ENCODE measurements at regions of chr6 and their contacts with region 1.

Region 1: GRCh38 chr6:150395398-150396009 is 26.7 kb downstream of the IYD start:
- H3K4me3 ChIP-seq: no peak overlapping the region
- H3K27ac ChIP-seq: no peak overlapping the region
- H3K4me1 ChIP-seq: no peaks in the 10 kb centered on the region
- CTCF ChIP-seq: peak; percentile 47; the same call in 1 of the 2 replicates

Region 2: GRCh38 chr6:150016324-150017185 is 378.9 kb before region 1 on chr6:
- CTCF ChIA-PET with region 1: interaction called, 14 read pairs
- POLR2A ChIA-PET with region 1: no interaction called
- H3K4me3 ChIP-seq: no peak overlapping the region
- H3K27ac ChIP-seq: no peak overlapping the region
- H3K4me1 ChIP-seq: no peaks in the 10 kb centered on the region
- CTCF ChIP-seq: peak; percentile 69; the same call in 1 of the 2 replicates

Region 3: GRCh38 chr6:150310539-150310938 is 85.0 kb before region 1 on chr6:
- CTCF ChIA-PET with region 1: no interaction called
- POLR2A ChIA-PET with region 1: no interaction called
- H3K4me3 ChIP-seq: no peak overlapping the region
- H3K27ac ChIP-seq: no peak overlapping the region
- H3K4me1 ChIP-seq: no peaks in the 10 kb centered on the region
- CTCF ChIP-seq: no peak

Region 4: DNA sequence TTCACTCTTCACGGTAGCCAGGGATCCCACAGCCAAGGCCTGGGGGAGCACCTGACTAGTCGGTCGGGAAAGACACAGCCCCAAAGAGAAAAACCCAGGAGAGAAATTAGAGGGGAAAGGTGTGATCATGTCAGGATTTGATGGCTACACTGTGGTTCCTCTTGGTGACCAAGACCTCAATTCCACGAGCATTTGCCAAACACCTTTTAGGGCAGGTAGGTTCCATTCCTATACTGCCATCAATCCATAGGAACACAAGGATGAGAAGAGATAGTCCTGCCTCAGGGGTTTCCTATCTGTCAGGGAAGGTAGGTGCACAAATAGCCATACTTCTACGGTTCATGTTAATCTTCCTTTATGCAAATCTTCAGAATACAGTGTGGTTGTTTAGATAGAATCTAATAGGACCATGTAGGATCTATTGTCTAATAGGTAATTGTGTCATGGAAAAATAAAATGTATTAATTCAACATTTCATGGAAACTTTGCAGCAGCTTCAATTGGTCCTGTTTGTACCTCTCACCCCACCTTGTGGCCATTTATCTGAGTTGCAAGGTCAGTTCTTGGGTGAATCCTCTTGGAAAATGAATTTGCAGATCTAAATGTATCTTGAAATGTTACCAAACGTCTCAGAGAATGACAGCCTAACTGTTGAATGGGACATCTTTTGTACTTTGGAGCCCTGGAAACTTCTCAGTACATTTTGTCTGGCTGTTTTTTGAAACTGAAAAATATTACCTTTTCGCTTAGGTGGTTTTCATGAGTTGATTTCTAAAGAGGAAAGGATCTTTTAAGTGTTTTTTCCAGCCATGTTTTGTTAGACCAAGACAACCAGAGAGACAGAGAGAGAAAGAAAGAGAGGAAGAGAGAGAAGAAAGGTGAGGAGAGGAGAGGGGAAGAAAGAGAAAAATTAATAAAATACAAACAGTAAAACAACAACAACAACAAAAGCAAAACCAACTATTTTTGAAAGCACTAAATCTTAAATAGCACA is 60.4 kb before region 1 on chr6:
- CTCF ChIA-PET with region 1: interaction called, 14 read pairs
- POLR2A ChIA-PET with region 1: no interaction called
- H3K4me3 ChIP-seq: no peak overlapping the region
- H3K27ac ChIP-seq: no peak overlapping the region
- H3K4me1 ChIP-seq: peaks cover 2% of the 10 kb centered on the region; the same call in 1 of the 2 replicates
- CTCF ChIP-seq: no peak; the same call in 1 of the 2 replicates

Region 5: DNA sequence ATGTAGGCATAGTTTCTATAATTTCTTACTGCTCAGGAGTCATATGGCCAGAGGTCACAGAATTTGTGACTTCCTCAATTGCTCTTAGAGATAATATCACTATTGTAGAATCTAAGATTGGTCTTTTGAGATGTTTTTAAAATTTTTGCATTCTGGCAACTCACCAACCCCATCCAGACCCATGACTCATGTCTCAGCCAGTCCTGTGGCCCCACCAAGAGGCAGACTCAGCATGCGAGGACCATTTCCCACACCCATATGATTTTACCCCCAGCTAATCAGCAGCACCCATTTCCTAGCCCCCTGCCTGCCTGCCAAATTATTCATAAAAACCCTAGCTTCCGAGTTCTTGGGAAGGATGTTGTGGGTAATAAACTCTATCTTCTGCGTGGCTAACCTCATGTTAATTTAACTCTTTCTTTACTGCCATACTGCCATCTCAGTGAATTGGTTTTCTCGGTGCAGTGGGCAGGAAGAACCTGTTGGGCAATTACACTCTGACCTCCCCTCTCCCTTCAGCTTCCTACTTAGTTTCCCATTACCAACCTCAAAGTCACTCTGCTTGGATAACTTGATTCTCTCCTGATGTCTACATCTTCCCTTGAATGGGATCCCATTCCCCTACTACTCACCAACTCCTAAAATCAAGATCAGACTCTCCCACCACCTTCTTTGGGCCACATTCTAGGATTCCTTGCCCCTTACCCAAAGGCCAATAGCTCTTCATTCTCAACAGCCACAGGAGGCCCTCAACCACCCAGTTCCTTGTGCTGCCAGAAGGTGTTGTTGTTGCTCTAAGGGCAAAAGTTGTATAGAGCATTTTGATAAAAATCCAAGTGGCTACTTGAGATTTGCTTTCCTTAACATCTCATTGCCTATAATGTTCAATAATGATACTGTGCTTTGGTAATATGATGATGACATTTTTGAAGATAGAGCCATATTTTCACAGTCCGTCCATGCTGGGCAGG is 42.9 kb before region 1 on chr6:
- CTCF ChIA-PET with region 1: interaction called, 56 read pairs
- POLR2A ChIA-PET with region 1: no interaction called
- H3K4me3 ChIP-seq: no peak overlapping the region
- H3K27ac ChIP-seq: no peak overlapping the region; the same call in 1 of the 2 replicates
- H3K4me1 ChIP-seq: peaks cover 17% of the 10 kb centered on the region
- CTCF ChIP-seq: peak; percentile 26; the same call in 1 of the 2 replicates

Region 6: DNA sequence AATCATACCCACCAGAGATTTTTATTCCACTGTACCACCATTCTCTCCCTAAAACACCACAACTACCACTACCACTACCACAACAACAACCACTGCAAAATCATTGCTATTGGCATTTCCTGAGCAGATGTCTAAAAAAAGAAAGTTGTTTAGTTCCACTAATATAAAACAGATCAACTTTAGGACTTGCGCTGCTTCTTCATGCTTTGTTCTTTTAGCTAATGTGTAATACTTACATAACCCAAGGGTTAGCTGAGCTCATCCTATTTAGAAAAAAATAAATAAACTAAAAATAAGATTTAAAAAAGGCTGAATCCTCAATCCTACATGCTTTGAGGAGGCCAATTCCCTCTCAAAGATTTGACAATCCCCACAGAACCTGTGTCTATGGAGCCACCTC is 15.2 kb before region 1 on chr6:
- CTCF ChIA-PET with region 1: interaction called, 89 read pairs
- POLR2A ChIA-PET with region 1: no interaction called
- H3K4me3 ChIP-seq: no peak overlapping the region
- H3K27ac ChIP-seq: no peak overlapping the region
- H3K4me1 ChIP-seq: no peaks in the 10 kb centered on the region
- CTCF ChIP-seq: no peak

Region 7: DNA sequence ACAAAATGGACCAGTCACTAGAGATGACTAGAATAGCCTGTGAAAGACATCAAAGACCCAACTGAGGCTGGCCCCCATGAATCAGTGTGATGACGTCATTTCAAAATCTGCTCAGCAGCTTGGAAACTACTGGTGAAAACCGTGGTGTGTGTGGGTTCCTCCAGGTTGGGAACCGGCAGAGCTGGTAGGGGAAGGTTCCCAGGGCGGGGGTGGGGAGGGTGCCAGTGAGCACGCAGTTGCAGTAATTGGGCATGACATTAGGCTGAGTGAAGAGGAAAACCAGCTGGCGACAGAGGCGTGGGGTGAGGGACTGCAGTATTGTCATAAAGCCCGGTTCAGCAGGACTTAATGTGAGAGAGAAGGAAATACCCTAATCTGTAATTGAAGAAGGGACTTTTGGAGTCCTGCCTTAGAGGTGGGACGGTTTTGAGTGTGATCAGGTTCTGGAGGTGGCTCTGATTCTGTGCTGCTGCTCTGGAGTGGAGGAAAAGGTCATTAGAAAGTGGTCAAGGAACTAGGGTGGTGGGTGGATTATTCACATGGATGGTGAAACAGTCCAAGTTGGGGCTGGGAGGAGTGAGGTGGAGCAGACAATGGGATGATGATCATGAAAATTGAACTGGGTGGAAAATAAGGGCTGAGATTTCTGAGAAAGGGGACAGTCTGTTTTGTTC is 418.0 kb after region 1 on chr6:
- CTCF ChIA-PET with region 1: interaction called, 41 read pairs
- POLR2A ChIA-PET with region 1: interaction called, 5 read pairs
- H3K4me3 ChIP-seq: no peak overlapping the region
- H3K27ac ChIP-seq: no peak overlapping the region; the same call in 1 of the 2 replicates
- H3K4me1 ChIP-seq: peaks cover 11% of the 10 kb centered on the region; the same call in 1 of the 2 replicates
- CTCF ChIP-seq: no peak